ENCODE measurements at regions of chr5 and their contacts with region 1.

Region 1: GRCh38 chr5:108919591-108920326 is 172.1 kb downstream of the FER start:
- DNase-seq: no peak
- ATAC-seq: no peak
- H3K4me3 ChIP-seq: no peak overlapping the region
- H3K27ac ChIP-seq: no peak overlapping the region
- H3K4me1 ChIP-seq: no peaks in the 10 kb centered on the region
- H3K27me3 ChIP-seq: no peaks in the 10 kb centered on the region
- CTCF ChIP-seq: peak; percentile 22; the same call in 1 of the 2 replicates

Region 2: GRCh38 chr5:108681079-108681921 is 238.5 kb before region 1 on chr5:
- CTCF ChIA-PET with region 1: no interaction called
- POLR2A ChIA-PET with region 1: no interaction called
- in situ Hi-C with region 1: no loop called
- intact Hi-C with region 1: loop called (anchors 10 kb)
- DNase-seq: peak; percentile 63
- ATAC-seq: peak; percentile 91
- H3K4me3 ChIP-seq: no peak overlapping the region
- H3K27ac ChIP-seq: no peak overlapping the region
- H3K4me1 ChIP-seq: no peaks in the 10 kb centered on the region
- H3K27me3 ChIP-seq: peaks cover 12% of the 10 kb centered on the region
- CTCF ChIP-seq: peak; percentile 78